Mammary epithelial cell (primary cell): ENCODE measurements at regions of chr3 and their contacts with region 1.

Region 1: GRCh38 chr3:150079029-150079739 is 108.5 kb upstream of the PFN2 start:
- DNase-seq: peak; percentile 87
- H3K4me3 ChIP-seq: no peak overlapping the region
- H3K27ac ChIP-seq: peak overlapping the region; percentile 75
- H3K4me1 ChIP-seq: peaks cover 46% of the 10 kb centered on the region
- H3K27me3 ChIP-seq: no peaks in the 10 kb centered on the region
- CTCF ChIP-seq: peak in 1 of 2 donors; percentile 3

Region 2: DNA sequence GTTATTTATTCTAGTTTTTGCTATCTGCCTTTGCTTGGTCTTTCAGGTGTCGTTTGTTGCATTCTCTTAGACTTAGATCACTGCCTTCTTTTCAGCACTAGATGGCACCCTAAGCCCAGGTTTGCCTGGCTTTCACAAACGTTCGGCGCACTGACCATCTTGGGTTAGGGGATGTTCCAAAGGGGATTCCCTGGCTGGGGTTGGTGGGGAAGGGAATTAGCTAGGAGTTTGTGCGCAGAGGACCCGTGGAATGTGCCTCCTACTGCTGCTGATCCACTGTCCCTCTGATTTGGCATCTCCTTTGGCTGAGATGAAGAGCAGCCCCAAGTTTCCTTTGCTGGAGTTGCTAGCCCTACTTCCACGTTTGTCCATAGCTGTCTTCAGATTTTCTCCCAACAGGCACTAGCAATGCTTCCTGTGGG is 142.4 kb before region 1 on chr3:
- CTCF ChIA-PET with region 1: no interaction called
- dilution Hi-C with region 1: no loop called
- in situ Hi-C with region 1: no loop called
- intact Hi-C with region 1: no loop called
- DNase-seq: peak; percentile 32
- H3K4me3 ChIP-seq: no peak overlapping the region
- H3K27ac ChIP-seq: no peak overlapping the region
- H3K4me1 ChIP-seq: no peaks in the 10 kb centered on the region
- H3K27me3 ChIP-seq: no peaks in the 10 kb centered on the region
- CTCF ChIP-seq: peak; percentile 78 to 81

Region 3: DNA sequence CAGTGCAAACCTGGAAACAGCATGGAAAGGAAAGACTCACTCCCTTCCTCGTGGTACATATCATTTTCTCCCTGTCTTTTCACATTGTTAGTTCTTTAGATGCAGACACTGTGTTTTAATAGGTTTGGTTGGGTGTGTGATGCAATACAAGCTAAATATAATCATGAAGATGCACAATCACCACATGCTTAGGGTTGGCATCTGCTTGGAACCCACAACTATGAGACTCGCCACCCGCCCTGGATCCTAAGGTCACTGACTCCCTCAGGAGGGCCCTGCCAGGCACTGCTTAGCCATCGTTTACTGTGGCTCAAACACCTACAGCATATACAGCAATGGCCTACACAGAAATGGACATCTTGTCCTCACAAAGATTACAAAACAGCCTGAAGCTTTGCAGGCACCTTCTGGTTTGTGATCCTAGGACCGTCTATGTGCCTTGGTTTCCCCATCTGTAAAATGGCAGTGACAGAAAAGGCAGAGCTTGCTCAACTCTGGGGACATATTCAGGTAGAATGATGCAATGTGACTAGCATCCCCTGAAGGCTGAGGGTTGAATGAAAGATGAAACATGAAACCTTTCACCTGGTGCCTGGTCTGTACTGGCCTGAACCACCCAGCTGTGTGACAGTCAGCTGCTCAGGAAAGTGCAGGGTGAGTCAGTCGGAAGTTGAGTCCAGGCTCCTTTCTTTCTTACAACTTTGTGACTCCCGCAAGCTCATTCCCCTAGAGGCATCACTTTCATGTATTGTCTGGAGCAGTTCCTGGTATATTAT is 15.2 kb after region 1 on chr3:
- CTCF ChIA-PET with region 1: no interaction called
- dilution Hi-C with region 1: no loop called
- in situ Hi-C with region 1: no loop called
- intact Hi-C with region 1: loop called (anchors 1 kb)
- DNase-seq: peak; percentile 92
- H3K4me3 ChIP-seq: no peak overlapping the region
- H3K27ac ChIP-seq: no peak overlapping the region
- H3K4me1 ChIP-seq: peaks cover 36% of the 10 kb centered on the region
- H3K27me3 ChIP-seq: no peaks in the 10 kb centered on the region
- CTCF ChIP-seq: no peak

Region 4: DNA sequence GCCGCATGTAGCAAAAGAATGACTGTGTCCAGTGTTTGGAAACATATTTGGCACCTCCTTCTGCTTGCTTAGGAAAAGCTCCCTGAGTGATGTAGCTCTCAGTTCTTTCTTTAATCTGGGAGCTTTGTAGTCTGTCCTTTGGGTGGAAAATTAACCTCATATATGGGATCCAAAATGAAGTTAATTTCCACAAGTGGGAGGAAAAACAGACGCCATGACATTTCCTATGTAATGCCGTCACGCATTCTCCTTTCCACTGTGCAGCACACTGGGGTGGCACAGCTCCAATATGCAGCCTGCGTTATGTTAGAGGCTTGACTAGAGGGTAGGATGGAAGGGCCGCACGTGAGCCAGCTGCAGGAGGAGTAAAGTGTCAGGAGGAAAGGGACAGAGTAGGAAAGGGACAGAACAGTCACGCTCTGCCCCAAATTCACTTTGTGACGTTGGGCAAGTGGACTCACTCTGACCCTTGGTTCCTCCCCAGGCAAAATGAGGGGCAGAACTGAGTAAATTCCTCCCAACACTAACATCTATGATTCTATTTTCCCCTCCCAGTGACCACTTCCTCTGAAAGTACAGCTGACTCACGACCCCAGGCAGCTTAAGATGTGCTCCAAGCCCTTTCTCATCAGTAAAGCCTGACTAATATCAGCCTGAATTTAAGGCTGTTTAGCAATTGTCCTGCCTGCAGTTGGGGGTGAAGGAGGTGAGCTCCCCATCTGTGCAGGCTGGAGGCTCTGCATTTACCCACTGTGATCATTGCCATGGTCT is 68.0 kb after region 1 on chr3:
- CTCF ChIA-PET with region 1: no interaction called
- dilution Hi-C with region 1: no loop called
- in situ Hi-C with region 1: no loop called
- intact Hi-C with region 1: loop called (anchors 5 kb)
- DNase-seq: peak; percentile 82
- H3K4me3 ChIP-seq: no peak overlapping the region
- H3K27ac ChIP-seq: peak overlapping the region; percentile 27
- H3K4me1 ChIP-seq: peaks cover 27% of the 10 kb centered on the region
- H3K27me3 ChIP-seq: no peaks in the 10 kb centered on the region
- CTCF ChIP-seq: no peak